ENCODE measurements at regions of chr1 and their contacts with region 1.

Region 1: DNA sequence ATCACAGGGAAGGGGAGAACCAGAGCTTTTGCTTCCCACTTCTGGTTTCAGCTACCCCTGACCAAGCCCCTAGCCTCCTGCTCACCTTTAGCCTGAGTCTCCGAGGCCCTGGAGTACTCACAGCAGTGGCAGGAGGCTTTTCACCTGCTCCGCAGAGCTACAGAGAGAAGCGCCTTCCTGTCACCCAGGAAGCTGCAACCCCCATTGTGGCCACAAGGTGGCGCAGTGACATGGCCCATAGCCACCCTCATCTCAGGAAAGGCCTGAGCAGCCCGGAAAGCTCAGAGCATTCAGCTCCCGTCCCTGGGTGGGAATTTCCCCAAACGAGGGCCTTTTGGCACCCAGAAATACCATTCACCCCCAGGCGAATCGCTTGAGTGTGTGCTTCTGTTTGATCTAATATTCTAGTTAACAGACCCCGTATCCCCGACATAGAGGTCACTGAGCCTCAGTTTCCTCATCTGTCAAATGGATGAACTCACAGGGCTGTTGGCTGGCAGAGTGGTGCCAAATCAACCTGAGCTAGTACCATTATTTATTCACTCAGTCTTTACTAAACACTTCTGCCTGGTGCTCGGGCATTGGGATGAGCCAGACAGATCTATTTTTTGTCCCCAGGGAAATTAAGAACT is 25.3 kb downstream of the A3GALT2 start:
- DNase-seq: peak; percentile 67 to 88 (median 79)
- ATAC-seq: peak; percentile 95
- H3K4me3 ChIP-seq: no peak overlapping the region
- H3K4me3 Mint-ChIP-seq: no peak overlapping the region
- H3K27ac ChIP-seq: no peak overlapping the region
- H3K27ac Mint-ChIP-seq: peak overlapping the region in 6 of 9 donors; percentile 8 to 76 (median 52)
- H3K4me1 ChIP-seq: no peaks in the 10 kb centered on the region
- H3K4me1 Mint-ChIP-seq: peaks cover 4 to 17% (median 13%) of the 10 kb centered on the region in 7 donors
- H3K27me3 ChIP-seq: no peaks in the 10 kb centered on the region
- H3K27me3 Mint-ChIP-seq: no peaks in the 10 kb centered on the region

Region 2: DNA sequence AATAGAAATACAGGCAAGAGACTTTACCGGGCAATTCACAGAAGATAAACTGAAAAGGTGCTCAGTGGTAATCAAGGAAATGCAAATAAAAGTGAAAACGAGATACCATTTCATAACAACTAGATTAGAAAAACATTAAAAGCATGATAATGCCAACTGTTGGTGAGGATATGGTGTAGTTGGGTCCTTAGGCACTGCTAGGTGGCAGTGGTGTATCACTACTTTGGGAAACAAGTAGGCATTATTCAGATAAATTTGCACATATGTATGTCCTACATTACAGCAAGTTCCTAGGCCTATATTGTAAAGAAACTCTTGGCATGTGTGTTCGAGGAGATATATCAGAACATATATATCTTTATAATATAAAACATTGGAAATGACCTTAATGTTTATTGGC is 183.6 kb before region 1 on chr1:
- CTCF ChIA-PET with region 1: no interaction called
- POLR2A ChIA-PET with region 1: no interaction called
- intact Hi-C with region 1: loop called (anchors 2 to 10 kb)
- DNase-seq: peak in 1 of 9 donors; percentile 27
- ATAC-seq: peak; percentile 41
- H3K4me3 ChIP-seq: no peak overlapping the region
- H3K4me3 Mint-ChIP-seq: no peak overlapping the region
- H3K27ac ChIP-seq: no peak overlapping the region
- H3K27ac Mint-ChIP-seq: no peak overlapping the region
- H3K4me1 ChIP-seq: no peaks in the 10 kb centered on the region
- H3K4me1 Mint-ChIP-seq: peaks cover 0 to 12% (median 0%) of the 10 kb centered on the region in 7 donors
- H3K27me3 ChIP-seq: no peaks in the 10 kb centered on the region
- H3K27me3 Mint-ChIP-seq: no peaks in the 10 kb centered on the region

Region 3: DNA sequence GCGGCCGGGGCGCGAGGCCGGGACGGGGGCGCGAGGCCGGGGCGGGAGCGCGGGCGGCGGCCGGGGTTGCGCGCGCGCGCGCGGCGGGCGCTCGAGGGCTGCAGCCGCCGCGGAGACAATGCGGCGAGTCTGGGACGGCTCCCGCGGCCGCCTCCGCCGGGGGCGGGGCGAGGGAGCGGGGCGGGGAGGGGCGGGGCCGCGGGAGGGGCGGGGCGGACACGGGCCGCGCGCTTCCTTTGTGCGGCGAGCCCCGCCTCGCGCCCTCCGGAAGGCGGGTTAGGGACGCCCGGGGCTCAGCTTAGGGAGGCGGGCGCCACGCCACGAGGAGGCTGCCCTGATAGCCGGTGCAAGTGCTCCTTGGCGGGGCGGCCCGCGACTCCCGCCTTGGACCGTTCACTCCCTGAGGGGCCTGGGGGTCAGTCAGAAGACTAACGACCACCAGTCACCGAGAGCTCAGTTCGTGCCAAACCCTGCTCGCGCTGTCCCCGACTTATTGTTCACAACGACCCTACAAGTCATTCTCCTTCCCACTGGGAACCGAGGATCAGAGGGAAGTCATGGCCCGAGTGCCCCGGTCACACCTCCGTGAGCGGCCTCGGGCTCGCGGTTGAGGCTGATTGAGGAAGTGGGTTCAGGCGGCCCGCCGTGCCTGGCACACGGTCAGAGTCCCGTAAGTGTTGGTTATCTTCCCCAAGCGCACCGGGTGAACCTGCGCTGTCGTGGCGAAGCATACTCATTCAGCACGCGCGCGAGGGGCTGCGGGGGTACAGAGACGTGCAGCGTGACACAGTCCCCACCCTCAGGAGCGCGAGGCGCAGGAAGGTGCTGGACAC is 54.4 kb after region 1 on chr1:
- CTCF ChIA-PET with region 1: no interaction called
- POLR2A ChIA-PET with region 1: interaction called, 7 read pairs
- intact Hi-C with region 1: loop called (anchors 1 to 5 kb)
- DNase-seq: peak; percentile 64 to 85 (median 73)
- ATAC-seq: peak; percentile 93
- H3K4me3 ChIP-seq: peak overlapping the region; percentile 96
- H3K4me3 Mint-ChIP-seq: peak overlapping the region; percentile 89 to 95 (median 92)
- H3K27ac ChIP-seq: peak overlapping the region; percentile 69
- H3K27ac Mint-ChIP-seq: peak overlapping the region; percentile 54 to 91 (median 88)
- H3K4me1 ChIP-seq: peaks cover 23 to 25% of the 10 kb centered on the region in 2 donors
- H3K4me1 Mint-ChIP-seq: peaks cover 32 to 51% (median 46%) of the 10 kb centered on the region in 7 donors
- H3K27me3 ChIP-seq: no peaks in the 10 kb centered on the region
- H3K27me3 Mint-ChIP-seq: peaks cover 0 to 7% (median 0%) of the 10 kb centered on the region in 5 donors

Region 4: GRCh38 chr1:33455539-33456501 is 160.3 kb after region 1 on chr1:
- CTCF ChIA-PET with region 1: interaction called, 3 read pairs
- POLR2A ChIA-PET with region 1: no interaction called
- intact Hi-C with region 1: loop called (anchors 1 to 5 kb)
- DNase-seq: peak in 6 of 9 donors; percentile 19 to 44 (median 26)
- ATAC-seq: peak; percentile 89
- H3K4me3 ChIP-seq: no peak overlapping the region
- H3K4me3 Mint-ChIP-seq: no peak overlapping the region
- H3K27ac ChIP-seq: no peak overlapping the region
- H3K27ac Mint-ChIP-seq: peak overlapping the region in 3 of 9 donors; percentile 8 to 39 (median 33)
- H3K4me1 ChIP-seq: no peaks in the 10 kb centered on the region
- H3K4me1 Mint-ChIP-seq: peaks cover 0 to 5% (median 0%) of the 10 kb centered on the region in 7 donors
- H3K27me3 ChIP-seq: no peaks in the 10 kb centered on the region
- H3K27me3 Mint-ChIP-seq: peaks cover 0 to 25% (median 9%) of the 10 kb centered on the region in 5 donors